Common myeloid progenitor, CD34-positive (primary cell): ENCODE measurements at regions of chr4 and their contacts with region 1.

Region 1: GRCh38 chr4:25144870-25145481 is 15.3 kb downstream of the SEPSECS start:
- DNase-seq: peak; percentile 47 to 54 (median 53)
- H3K4me3 ChIP-seq: no peak overlapping the region
- H3K27ac ChIP-seq: no peak overlapping the region
- H3K4me1 ChIP-seq: no peaks in the 10 kb centered on the region
- H3K27me3 ChIP-seq: no peaks in the 10 kb centered on the region

Region 2: DNA sequence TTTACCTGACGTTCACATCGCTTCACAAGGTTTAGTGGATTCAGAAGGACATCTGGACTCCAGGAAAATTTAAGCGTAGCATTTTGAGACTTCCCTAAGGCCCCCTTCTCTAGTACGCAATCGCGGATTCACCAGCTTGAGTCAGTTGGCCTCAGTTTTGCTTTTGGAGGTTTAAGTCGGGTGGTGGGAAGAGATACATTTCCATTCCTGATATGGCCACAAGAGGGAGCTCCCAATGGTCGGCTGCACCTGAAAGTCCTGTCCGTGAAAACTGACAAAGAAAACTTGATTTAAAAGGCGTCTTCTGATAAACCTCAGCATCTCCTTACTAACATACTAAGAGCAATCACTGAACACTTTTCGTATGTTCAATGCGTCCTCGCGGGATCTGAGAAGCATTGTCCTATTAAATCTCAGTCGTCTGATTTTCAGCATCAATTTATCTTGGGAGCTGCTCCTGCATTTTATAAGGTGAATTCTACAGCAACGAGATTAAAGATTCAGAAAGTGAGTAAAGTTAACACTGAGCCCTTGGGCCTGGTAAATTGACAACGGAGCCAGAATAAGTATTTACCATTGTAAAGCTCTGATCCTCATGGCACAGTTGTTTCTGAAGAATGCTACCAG is 164.8 kb before region 1 on chr4:
- CTCF ChIA-PET with region 1: interaction called, 15 read pairs
- POLR2A ChIA-PET with region 1: no interaction called
- DNase-seq: peak; percentile 72 to 84 (median 83)
- H3K4me3 ChIP-seq: peak overlapping the region in 3 of 7 experiments; percentile 32 to 74 (median 57)
- H3K27ac ChIP-seq: no peak overlapping the region
- H3K4me1 ChIP-seq: peaks cover 9 to 32% (median 27%) of the 10 kb centered on the region in 4 experiments
- H3K27me3 ChIP-seq: no peaks in the 10 kb centered on the region

Region 3: DNA sequence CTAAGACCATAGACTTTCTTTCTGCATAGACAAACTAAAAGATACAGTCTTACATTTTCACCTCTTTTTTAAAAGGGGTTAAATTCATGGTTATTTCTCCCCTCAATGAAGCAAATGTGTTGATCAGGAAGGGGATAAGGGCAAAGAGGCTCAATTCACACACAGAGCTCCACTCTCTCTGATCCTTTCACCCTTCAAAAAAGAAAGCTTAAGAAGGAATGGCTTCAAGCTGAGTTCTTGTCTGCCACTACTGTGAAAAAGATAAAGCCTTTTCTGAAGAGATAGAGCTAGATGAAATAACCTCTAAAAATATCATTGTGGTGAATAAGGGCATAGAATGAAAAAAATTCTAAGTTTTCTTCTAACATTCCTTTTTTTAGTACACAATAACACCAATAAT is 13.1 kb before region 1 on chr4:
- CTCF ChIA-PET with region 1: interaction called, 15 read pairs
- POLR2A ChIA-PET with region 1: interaction called, 3 read pairs
- DNase-seq: no peak
- H3K4me3 ChIP-seq: no peak overlapping the region
- H3K27ac ChIP-seq: no peak overlapping the region
- H3K4me1 ChIP-seq: no peaks in the 10 kb centered on the region
- H3K27me3 ChIP-seq: no peaks in the 10 kb centered on the region

Region 4: DNA sequence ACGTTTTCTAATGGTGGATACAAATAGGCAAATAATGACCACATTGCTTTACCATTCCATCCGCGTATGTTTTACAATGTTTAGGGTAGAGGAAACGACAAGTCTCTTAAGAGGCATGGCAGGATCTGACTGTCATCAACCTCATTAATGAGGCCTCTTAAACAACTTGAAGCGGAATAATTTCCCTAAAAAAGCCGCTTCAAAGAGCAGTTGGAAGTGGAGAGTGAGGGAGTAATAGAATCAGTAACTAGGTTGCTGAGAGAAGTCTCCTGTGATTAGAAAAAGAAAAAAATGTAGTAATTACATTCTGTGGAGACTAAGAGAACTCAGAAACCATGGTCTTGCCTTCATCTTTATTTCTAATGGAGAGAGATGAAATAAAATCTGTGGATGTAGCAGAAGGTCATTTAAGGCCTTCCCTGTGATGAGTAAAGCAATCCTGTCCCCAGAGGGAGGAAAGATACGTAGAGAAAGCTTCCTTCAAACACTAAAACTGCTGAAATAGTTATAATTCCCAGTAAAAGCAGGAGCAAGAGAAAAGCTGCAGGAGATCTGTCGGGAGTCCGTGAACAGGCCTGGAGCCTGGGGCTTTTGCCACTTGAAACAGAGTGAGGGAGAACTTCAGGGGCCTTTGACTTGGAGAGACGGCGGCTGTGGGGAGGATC is 26.4 kb after region 1 on chr4:
- CTCF ChIA-PET with region 1: no interaction called
- POLR2A ChIA-PET with region 1: no interaction called
- DNase-seq: no peak
- H3K4me3 ChIP-seq: no peak overlapping the region
- H3K27ac ChIP-seq: no peak overlapping the region
- H3K4me1 ChIP-seq: peaks cover 0 to 19% (median under 1%) of the 10 kb centered on the region in 4 experiments
- H3K27me3 ChIP-seq: no peaks in the 10 kb centered on the region